ENCODE measurements at regions of chr10 and their contacts with region 1.

Region 1: GRCh38 chr10:61232780-61233179 is 220.4 kb downstream of the TMEM26 start:
- DNase-seq: no peak
- H3K4me3 ChIP-seq: no peak overlapping the region
- H3K27ac ChIP-seq: no peak overlapping the region
- H3K27me3 ChIP-seq: no peaks in the 10 kb centered on the region
- CTCF ChIP-seq: no peak

Region 2: DNA sequence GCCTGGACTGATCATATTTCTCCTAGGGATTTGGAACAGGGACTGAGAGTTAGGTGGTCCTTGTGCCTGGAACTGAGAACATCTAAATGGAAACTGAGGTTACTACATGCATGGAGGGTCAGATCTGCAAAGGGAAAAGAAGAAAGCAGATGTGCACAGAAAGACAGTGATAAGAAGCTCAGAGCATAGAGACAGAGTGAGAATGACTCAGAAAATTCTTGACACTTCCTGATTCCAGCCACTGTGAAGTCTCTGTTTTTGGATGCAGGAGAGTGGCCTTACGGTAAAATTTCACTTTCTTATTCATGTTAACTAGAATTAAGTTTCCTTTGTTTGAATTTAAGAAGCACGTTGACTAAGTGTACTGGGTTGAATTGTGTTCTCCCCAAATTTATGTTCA is 21.3 kb before region 1 on chr10:
- intact Hi-C with region 1: loop called in 1 of 2 experiments (anchors 1 kb)
- DNase-seq: no peak
- H3K4me3 ChIP-seq: no peak overlapping the region
- H3K27ac ChIP-seq: no peak overlapping the region
- H3K27me3 ChIP-seq: no peaks in the 10 kb centered on the region
- CTCF ChIP-seq: no peak